ENCODE measurements at regions of chr12 and their contacts with region 1.

Region 1: GRCh38 chr12:92649511-92650227 is 53.1 kb upstream of the PLEKHG7 start:
- DNase-seq: peak; percentile 82
- H3K4me3 ChIP-seq: no peak overlapping the region
- H3K27ac ChIP-seq: no peak overlapping the region
- H3K4me1 ChIP-seq: peaks cover 16% of the 10 kb centered on the region
- H3K27me3 ChIP-seq: no peaks in the 10 kb centered on the region
- CTCF ChIP-seq: peak; percentile 62 to 84

Region 2: GRCh38 chr12:91382081-91382543 is 1267.6 kb before region 1 on chr12:
- CTCF ChIA-PET with region 1: no interaction called
- dilution Hi-C with region 1: no loop called
- in situ Hi-C with region 1: loop called in 1 of 2 experiments (anchors 25 kb)
- intact Hi-C with region 1: loop called (anchors 1 kb)
- DNase-seq: peak; percentile 72
- H3K4me3 ChIP-seq: peak overlapping the region; percentile 39 to 45 (median 43)
- H3K27ac ChIP-seq: no peak overlapping the region
- H3K4me1 ChIP-seq: peaks cover 6% of the 10 kb centered on the region
- H3K27me3 ChIP-seq: no peaks in the 10 kb centered on the region
- CTCF ChIP-seq: peak; percentile 65 to 90

Region 3: GRCh38 chr12:91811481-91812287 is 838.0 kb before region 1 on chr12:
- CTCF ChIA-PET with region 1: no interaction called
- dilution Hi-C with region 1: no loop called
- in situ Hi-C with region 1: no loop called
- intact Hi-C with region 1: loop called (anchors 10 kb)
- DNase-seq: peak; percentile 39
- H3K4me3 ChIP-seq: no peak overlapping the region
- H3K27ac ChIP-seq: no peak overlapping the region
- H3K4me1 ChIP-seq: peaks cover 6% of the 10 kb centered on the region
- H3K27me3 ChIP-seq: no peaks in the 10 kb centered on the region
- CTCF ChIP-seq: peak; percentile 75 to 79

Region 4: DNA sequence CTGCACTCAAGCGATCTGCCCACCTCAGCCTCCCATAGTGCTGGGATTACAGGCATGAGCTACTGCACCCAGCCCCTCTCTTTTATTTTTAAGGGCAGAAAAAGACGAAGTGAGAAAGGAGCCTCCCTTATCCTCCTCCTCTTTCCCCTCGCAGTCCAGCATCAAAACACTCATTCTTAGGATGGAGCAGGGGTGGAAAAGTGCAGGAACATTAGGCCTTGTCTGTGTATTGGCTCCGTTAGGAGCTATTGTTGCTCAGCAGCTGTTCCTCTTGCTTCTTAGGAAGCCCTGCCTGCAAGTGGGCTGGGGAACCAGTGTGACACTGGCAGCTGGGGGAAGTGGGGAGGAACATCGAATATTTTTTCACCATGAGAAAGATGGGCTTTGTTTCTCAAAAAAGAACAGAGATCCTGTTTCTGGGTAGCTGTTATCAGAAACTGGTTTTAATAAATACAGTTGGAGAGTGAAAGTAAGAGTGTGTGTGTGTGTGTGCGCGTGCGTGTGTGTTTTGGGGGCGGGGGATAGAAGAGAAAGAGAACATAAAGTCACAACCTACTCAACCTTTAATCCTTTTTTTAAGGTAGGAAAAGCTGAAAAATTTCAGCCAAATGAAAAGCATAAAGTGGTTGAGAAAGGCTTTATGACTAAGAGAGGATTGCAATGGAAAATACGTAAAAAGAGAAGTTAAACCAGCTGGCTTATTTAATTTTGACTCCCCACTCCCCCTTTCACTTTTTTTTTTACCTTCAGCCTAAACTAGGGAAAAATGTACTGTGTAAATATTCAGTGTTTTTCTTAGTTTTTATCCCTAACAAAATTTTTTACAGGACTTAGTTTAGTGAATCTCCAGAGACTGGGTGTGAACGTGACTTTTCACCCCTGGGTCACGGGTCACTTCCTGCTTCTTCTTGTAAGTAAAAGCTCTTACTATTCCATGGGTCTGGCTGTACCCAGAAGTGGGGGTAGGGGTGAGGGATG is 144.1 kb before region 1 on chr12:
- CTCF ChIA-PET with region 1: no interaction called
- dilution Hi-C with region 1: no loop called
- in situ Hi-C with region 1: no loop called
- intact Hi-C with region 1: loop called (anchors 2 kb)
- DNase-seq: no peak
- H3K4me3 ChIP-seq: no peak overlapping the region
- H3K27ac ChIP-seq: no peak overlapping the region
- H3K4me1 ChIP-seq: peaks cover 3% of the 10 kb centered on the region
- H3K27me3 ChIP-seq: no peaks in the 10 kb centered on the region
- CTCF ChIP-seq: no peak

Region 5: DNA sequence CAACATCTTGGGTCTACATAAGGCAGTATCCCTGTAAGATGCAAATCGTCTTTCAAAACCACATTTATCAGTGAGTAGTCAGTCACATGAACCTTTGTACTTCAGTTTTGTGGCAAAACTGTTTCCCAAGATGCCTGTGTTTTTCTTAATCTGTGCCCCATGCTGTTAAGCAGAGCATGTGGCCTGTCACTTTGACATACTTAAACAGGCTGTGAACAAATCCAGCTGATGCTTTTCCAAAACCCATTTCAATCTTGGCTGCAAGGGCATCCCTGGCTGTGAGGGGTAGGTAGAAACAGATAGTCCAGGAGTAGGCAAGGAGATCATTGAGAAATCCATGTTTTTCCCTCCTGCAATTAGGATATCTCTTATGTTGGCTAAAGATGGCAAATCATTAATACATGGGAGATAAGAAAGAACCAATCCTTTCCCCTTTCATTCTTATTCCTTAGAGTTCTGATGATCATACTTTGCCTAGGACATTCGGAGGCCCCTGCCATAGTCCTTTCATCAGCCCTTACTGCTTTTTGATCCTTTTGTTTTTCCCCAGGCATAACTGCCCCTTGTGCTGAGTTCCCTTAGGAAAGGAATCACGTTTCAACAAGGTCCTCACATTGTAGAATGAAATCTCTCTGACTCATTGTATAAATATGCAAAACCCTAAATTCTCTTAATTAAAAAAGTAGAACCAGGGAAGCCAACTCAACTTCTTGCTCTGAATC is 400.5 kb after region 1 on chr12:
- CTCF ChIA-PET with region 1: no interaction called
- dilution Hi-C with region 1: no loop called
- in situ Hi-C with region 1: no loop called
- intact Hi-C with region 1: no loop called
- DNase-seq: peak; percentile 14
- H3K4me3 ChIP-seq: no peak overlapping the region
- H3K27ac ChIP-seq: no peak overlapping the region
- H3K4me1 ChIP-seq: peaks cover 9% of the 10 kb centered on the region
- H3K27me3 ChIP-seq: no peaks in the 10 kb centered on the region
- CTCF ChIP-seq: no peak

Measured in mammary epithelial cell (primary cell).